AG04449 (cell line): ENCODE measurements at regions of chr6 and their contacts with region 1.

Region 1: DNA sequence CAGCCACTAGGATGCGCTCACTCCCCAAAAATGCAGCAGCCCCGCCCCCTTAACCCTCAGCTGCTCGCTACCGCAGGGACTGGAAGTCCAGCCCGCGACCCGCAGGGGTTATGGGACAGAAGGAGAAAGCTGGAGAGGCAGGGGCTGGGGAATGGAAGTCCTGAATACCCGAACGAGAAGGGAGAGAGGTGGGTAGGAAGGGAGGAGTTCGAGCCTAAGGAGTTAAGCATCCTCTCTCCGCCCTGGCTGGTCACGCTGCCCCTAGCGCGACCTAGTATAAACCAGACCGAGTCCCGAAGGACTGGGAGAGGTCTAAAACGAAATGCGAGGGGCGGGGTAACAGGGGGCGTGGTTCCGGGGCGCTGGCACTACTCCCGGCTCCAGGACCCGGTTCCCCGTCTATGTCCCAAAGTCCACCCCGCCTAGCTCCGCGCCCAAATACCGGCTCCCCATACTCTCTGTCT is 448 bp upstream of the DDAH2 start:
- DNase-seq: no peak
- H3K4me3 ChIP-seq: peak overlapping the region; percentile 89
- CTCF ChIP-seq: peak; percentile 72

Region 2: GRCh38 chr6:30206799-30207618 is 1522.5 kb before region 1 on chr6:
- CTCF ChIA-PET with region 1: no interaction called
- POLR2A ChIA-PET with region 1: no interaction called
- DNase-seq: no peak
- H3K4me3 ChIP-seq: no peak overlapping the region; the same call in 1 of the 2 replicates
- CTCF ChIP-seq: no peak

Region 3: DNA sequence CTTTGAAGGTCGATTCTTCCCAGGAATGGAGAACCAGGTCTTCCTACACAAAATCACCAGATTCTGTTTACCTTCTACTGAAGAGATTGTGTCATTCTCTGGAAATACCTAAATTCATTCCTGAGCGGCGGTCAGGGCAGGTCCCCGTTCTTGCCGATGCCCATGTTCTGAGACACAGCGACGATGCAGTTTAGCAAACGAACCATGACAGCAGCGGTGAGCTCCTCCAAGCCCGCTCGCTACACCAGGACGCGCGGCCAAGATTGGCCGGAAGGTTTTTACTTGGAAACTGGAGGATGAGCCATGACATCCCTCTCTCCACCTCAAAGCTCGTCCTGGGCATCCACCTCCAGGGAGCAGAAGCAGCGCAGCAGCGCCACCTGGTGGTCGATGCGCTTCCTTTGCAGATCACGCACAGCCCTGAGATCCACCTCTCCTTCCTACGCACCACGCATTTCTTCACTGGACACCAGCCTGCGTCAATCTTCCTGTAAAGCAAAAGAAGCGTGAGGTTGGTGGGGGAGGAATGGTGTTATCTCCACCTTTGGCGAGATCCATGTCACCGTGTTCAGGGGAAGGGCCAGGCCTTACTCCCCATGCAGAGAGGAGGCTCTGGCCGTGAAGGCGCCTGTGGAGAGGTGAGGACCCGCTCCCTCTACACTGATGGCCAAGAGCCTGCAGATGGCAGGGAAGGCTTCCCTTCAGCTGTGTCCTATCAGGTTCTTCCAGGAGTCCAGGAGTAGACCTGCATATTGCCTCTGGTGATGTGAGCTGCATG is 362.7 kb before region 1 on chr6:
- CTCF ChIA-PET with region 1: no interaction called
- POLR2A ChIA-PET with region 1: no interaction called
- DNase-seq: peak; percentile 42
- H3K4me3 ChIP-seq: peak overlapping the region; percentile 38
- CTCF ChIP-seq: peak; percentile 99

Region 4: GRCh38 chr6:31426395-31427354 is 302.9 kb before region 1 on chr6:
- CTCF ChIA-PET with region 1: no interaction called
- POLR2A ChIA-PET with region 1: no interaction called
- DNase-seq: no peak
- H3K4me3 ChIP-seq: no peak overlapping the region
- CTCF ChIP-seq: no peak

Region 5: DNA sequence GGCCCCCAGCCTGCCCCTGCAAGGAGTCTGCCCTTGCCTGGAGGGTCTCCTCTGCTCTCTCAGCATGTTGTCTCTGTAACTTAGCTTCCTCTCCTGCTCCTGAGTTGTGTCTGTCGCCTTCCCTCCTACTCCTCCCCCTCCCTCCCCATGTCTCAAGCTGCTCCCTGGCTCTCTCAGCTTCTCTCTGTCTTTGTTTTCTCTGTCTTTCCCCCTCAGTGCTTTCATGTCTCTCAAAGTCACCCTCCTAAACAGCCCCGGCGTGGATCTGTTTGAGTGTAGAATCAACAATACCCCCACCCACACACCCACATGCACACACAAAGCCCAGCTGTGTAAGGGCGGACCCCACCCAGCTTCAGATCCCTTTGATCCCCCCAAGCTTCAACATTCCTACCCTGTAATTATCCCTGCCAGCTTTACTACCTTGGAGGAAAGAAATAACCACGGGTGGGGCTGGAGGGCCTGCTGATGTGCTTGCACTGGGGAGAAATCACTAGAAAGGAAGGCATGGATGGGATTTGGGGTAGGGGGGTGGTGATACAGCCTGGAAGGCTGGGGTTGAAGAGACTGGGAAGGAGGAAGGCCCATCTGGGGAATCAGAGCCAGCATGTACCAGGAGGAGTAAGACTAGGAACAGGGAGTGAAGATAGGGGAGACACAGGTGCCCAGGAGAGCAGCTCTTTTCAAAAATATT is 15.4 kb before region 1 on chr6:
- CTCF ChIA-PET with region 1: interaction called, 12 read pairs
- POLR2A ChIA-PET with region 1: interaction called, 5 read pairs
- DNase-seq: no peak
- H3K4me3 ChIP-seq: no peak overlapping the region
- CTCF ChIP-seq: no peak

Region 6: GRCh38 chr6:31739639-31740396 is 10.3 kb after region 1 on chr6 and contains the start of gene MSH5:
- CTCF ChIA-PET with region 1: interaction called, 24 read pairs
- POLR2A ChIA-PET with region 1: interaction called, 9 read pairs
- DNase-seq: peak; percentile 91
- H3K4me3 ChIP-seq: peak within 1 kb of the TSS; percentile 95
- CTCF ChIP-seq: no peak

Region 7: GRCh38 chr6:31815025-31815838 is 85.7 kb after region 1 on chr6 and contains the starts of genes HSPA1A and HSPA1L:
- CTCF ChIA-PET with region 1: interaction called, 10 read pairs
- POLR2A ChIA-PET with region 1: interaction called, 6 read pairs
- DNase-seq: peak; percentile 63
- H3K4me3 ChIP-seq: peak within 1 kb of the TSS; percentile 80
- CTCF ChIP-seq: no peak

Region 8: DNA sequence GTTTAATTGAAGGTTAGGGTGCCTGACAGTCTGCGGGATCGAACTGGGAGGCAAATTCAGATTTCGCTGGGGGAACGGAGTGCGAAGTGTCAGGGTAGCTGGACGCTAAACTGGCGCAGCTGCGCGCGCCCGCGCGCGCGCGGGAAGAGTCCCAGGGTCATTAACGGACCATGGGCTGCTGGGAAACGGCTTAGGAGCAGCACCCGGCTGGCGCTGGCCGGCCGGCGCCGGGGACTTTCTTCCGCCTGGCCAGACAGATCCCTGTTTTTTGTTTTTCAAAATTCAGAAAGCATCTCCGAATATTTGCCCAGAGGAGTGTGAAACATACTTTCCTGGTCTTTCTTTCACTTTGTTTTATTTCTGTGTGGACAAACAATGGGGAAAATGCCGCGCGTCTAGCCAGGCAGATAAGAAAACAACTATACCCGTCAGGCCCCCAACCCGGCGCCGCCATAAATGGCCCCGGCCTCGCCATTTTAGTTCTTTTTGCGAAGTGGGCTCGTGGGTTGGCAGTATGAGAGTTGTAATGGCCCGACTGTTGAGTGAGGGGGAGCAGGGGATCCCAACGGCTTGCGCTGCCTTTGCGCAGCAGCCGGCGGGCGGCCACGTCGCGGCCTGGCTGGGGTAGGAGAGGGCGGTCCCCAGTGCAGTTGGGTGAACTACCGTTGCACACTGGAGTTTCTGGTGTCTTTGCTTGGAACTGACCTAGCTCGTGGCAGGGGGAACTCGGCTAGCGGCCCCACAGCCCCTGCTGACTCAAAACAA is 105.1 kb after region 1 on chr6:
- CTCF ChIA-PET with region 1: interaction called, 10 read pairs
- POLR2A ChIA-PET with region 1: interaction called, 14 read pairs
- DNase-seq: no peak
- H3K4me3 ChIP-seq: peak overlapping the region; percentile 93
- CTCF ChIP-seq: no peak